ENCODE measurements at regions of chr6 and their contacts with region 1.

Region 1: GRCh38 chr6:126804332-126805064 is 314.0 kb upstream of the RSPO3 start:
- DNase-seq: no peak
- ATAC-seq: peak; percentile 92
- H3K4me3 ChIP-seq: no peak overlapping the region
- H3K27ac ChIP-seq: no peak overlapping the region
- H3K4me1 ChIP-seq: no peaks in the 10 kb centered on the region
- H3K27me3 ChIP-seq: no peaks in the 10 kb centered on the region
- CTCF ChIP-seq: peak; percentile 58 to 71 (median 65); a peak in 5 of 6 replicates
- EP300 ChIP-seq: no peak
- POLR2A ChIP-seq: no peak
- RAD21 ChIP-seq: peak; percentile 67

Region 2: GRCh38 chr6:126526996-126527606 is 277.4 kb before region 1 on chr6:
- CTCF ChIA-PET with region 1: no interaction called
- POLR2A ChIA-PET with region 1: no interaction called
- RAD21 ChIA-PET with region 1: no interaction called
- SMC1A ChIA-PET with region 1: no interaction called
- in situ Hi-C with region 1: no loop called
- intact Hi-C with region 1: no loop called
- DNase-seq: no peak
- ATAC-seq: no peak
- H3K4me3 ChIP-seq: no peak overlapping the region
- H3K27ac ChIP-seq: no peak overlapping the region
- H3K4me1 ChIP-seq: no peaks in the 10 kb centered on the region
- H3K27me3 ChIP-seq: no peaks in the 10 kb centered on the region
- CTCF ChIP-seq: no peak
- EP300 ChIP-seq: no peak
- POLR2A ChIP-seq: no peak
- RAD21 ChIP-seq: no peak

Region 3: DNA sequence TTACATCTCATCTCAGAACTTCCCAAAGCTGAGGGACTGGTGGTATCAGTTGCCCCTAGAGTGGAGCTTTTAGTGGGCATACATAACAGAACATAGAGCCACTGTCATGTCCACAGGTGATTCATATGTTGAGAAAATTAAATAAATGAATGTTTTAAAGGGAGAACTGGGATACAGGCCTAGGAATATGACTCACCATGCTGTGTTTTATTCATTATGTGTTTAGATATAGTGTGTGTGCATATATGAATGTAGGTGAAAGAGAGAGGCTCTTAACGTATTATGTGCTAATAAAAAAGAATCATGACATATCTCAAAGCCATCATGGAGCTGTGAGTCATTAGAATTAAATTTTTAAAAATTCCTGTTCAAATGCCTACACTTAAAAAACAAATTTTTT is 18.2 kb before region 1 on chr6:
- CTCF ChIA-PET with region 1: interaction called, 12 read pairs
- POLR2A ChIA-PET with region 1: no interaction called
- RAD21 ChIA-PET with region 1: interaction called, 3 read pairs
- SMC1A ChIA-PET with region 1: no interaction called
- in situ Hi-C with region 1: no loop called
- intact Hi-C with region 1: no loop called
- DNase-seq: no peak
- ATAC-seq: no peak
- H3K4me3 ChIP-seq: no peak overlapping the region
- H3K27ac ChIP-seq: no peak overlapping the region
- H3K4me1 ChIP-seq: no peaks in the 10 kb centered on the region
- H3K27me3 ChIP-seq: no peaks in the 10 kb centered on the region
- CTCF ChIP-seq: no peak
- EP300 ChIP-seq: no peak
- POLR2A ChIP-seq: no peak
- RAD21 ChIP-seq: no peak

Region 4: GRCh38 chr6:126820634-126821033 is 16.1 kb after region 1 on chr6:
- CTCF ChIA-PET with region 1: interaction called, 11 read pairs
- POLR2A ChIA-PET with region 1: no interaction called
- RAD21 ChIA-PET with region 1: no interaction called
- SMC1A ChIA-PET with region 1: interaction called, 6 read pairs
- in situ Hi-C with region 1: no loop called
- intact Hi-C with region 1: no loop called
- DNase-seq: no peak
- ATAC-seq: no peak
- H3K4me3 ChIP-seq: no peak overlapping the region
- H3K27ac ChIP-seq: no peak overlapping the region
- H3K4me1 ChIP-seq: no peaks in the 10 kb centered on the region
- H3K27me3 ChIP-seq: no peaks in the 10 kb centered on the region
- CTCF ChIP-seq: no peak
- EP300 ChIP-seq: no peak
- POLR2A ChIP-seq: no peak
- RAD21 ChIP-seq: no peak

Region 5: DNA sequence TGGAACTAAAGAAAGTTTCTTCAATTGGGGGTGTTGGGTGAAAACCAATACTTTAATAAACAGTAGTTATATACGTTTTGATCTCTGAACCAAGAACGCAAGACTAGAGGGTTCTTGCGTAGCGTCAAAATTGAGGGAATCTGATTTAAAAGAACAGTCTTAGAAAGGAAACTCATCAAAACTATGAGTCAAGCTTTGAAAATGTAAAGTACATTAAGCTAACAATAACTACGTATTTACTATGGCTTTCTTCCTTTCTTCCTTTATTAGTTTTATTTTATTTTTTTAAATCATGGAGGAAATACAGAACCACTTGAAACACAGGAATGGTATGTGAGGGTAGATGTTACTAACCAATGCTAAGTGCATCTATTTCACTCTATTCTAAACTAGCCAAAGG is 27.0 kb after region 1 on chr6:
- CTCF ChIA-PET with region 1: no interaction called
- POLR2A ChIA-PET with region 1: no interaction called
- RAD21 ChIA-PET with region 1: no interaction called
- SMC1A ChIA-PET with region 1: no interaction called
- in situ Hi-C with region 1: no loop called
- intact Hi-C with region 1: no loop called
- DNase-seq: no peak
- ATAC-seq: no peak
- H3K4me3 ChIP-seq: no peak overlapping the region
- H3K27ac ChIP-seq: no peak overlapping the region
- H3K4me1 ChIP-seq: no peaks in the 10 kb centered on the region
- H3K27me3 ChIP-seq: no peaks in the 10 kb centered on the region
- CTCF ChIP-seq: no peak
- EP300 ChIP-seq: no peak
- POLR2A ChIP-seq: no peak
- RAD21 ChIP-seq: no peak

Region 6: GRCh38 chr6:127120787-127121636 is 316.5 kb after region 1 on chr6:
- CTCF ChIA-PET with region 1: interaction called, 8 read pairs
- POLR2A ChIA-PET with region 1: no interaction called
- RAD21 ChIA-PET with region 1: interaction called, 4 read pairs
- SMC1A ChIA-PET with region 1: interaction called, 9 read pairs
- in situ Hi-C with region 1: loop called (anchors 5 kb)
- intact Hi-C with region 1: loop called (anchors 1 kb)
- DNase-seq: peak; percentile 24
- ATAC-seq: peak; percentile 90
- H3K4me3 ChIP-seq: no peak overlapping the region
- H3K27ac ChIP-seq: no peak overlapping the region
- H3K4me1 ChIP-seq: peaks cover 5% of the 10 kb centered on the region
- H3K27me3 ChIP-seq: peaks cover 9 to 24% of the 10 kb centered on the region in 2 experiments
- CTCF ChIP-seq: peak; percentile 81 to 96 (median 85)
- EP300 ChIP-seq: no peak
- POLR2A ChIP-seq: no peak
- RAD21 ChIP-seq: peak; percentile 97

Measured in GM12878 (cell line).